A549 (cell line): ENCODE measurements at regions of chr16 and their contacts with region 1.

Region 1: DNA sequence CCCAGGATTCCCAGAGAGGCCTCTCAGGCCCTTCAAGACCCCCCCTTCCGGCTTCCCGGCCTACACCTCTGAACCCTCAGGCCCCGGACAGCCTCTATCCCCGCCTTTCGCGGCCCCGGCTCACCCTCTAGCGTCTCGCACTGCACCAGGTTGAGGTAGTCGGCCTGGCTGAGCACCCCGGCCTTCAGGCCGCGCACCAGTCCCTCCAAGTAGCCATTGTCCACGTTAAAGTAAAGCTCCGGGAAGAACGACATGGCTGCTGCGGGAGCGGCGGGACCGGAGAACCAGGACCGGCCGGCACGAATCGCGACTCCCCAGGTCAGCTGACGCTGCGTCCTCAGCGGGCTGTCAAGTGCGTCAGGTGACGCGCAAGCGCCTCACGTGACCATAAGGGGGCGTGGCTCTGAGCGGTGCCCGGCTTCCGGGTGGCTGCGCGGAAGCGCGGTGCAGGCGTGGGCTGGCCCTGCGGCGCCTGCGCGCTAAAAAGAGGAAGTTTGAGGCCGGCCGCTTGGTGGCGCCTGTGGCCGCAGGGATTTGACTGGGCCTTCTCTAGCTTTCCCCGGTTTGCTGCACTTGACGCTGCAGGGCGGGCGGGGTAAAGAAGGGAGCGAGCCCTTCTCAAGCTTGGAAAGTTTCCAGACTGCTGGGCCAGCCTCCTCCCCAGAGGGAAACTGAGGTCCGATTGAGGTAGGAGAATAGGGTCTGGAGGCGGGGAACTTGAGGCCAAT is at the start of gene ATP6V0D1:
- DNase-seq: peak; percentile 95 to 98
- ATAC-seq: peak; percentile 91 to 93
- H3K4me3 ChIP-seq: peak within 1 kb of the TSS; percentile 91
- H3K27ac ChIP-seq: peak within 1 kb of the TSS; percentile 86 to 88
- H3K4me1 ChIP-seq: peaks cover 13% of the 10 kb centered on the region
- CTCF ChIP-seq: peak; percentile 88
- EP300 ChIP-seq: 0 out of 5 replicates have a peak, but pooled peaks of 1 of the 2 experiments have one; percentile 14
- POLR2A ChIP-seq: peak; percentile 62
- RAD21 ChIP-seq: peak; percentile 46 to 61; a peak in 4 of 5 replicates
- polyA plus RNA-seq, gene ATP6V0D1: 45.6 and 45.7 TPM in 2 replicates

Region 2: GRCh38 chr16:67461600-67462592 is 19.1 kb before region 1 on chr16:
- CTCF ChIA-PET with region 1: interaction called, 32 read pairs
- POLR2A ChIA-PET with region 1: interaction called, 3 read pairs
- DNase-seq: no peak
- ATAC-seq: no peak
- H3K4me3 ChIP-seq: no peak overlapping the region
- H3K27ac ChIP-seq: no peak overlapping the region; a peak in 1 of 6 replicates
- H3K4me1 ChIP-seq: peaks cover 17% of the 10 kb centered on the region; the same call in 2 of the 3 replicates
- CTCF ChIP-seq: no peak
- EP300 ChIP-seq: no peak
- POLR2A ChIP-seq: no peak
- RAD21 ChIP-seq: no peak

Region 3: GRCh38 chr16:67470359-67470758 is 10.6 kb before region 1 on chr16:
- CTCF ChIA-PET with region 1: interaction called, 32 read pairs
- POLR2A ChIA-PET with region 1: no interaction called
- DNase-seq: no peak
- ATAC-seq: no peak
- H3K4me3 ChIP-seq: no peak overlapping the region
- H3K27ac ChIP-seq: no peak overlapping the region
- H3K4me1 ChIP-seq: peaks cover 4% of the 10 kb centered on the region; the same call in 2 of the 3 replicates
- CTCF ChIP-seq: no peak
- EP300 ChIP-seq: no peak
- POLR2A ChIP-seq: no peak
- RAD21 ChIP-seq: no peak

Region 4: DNA sequence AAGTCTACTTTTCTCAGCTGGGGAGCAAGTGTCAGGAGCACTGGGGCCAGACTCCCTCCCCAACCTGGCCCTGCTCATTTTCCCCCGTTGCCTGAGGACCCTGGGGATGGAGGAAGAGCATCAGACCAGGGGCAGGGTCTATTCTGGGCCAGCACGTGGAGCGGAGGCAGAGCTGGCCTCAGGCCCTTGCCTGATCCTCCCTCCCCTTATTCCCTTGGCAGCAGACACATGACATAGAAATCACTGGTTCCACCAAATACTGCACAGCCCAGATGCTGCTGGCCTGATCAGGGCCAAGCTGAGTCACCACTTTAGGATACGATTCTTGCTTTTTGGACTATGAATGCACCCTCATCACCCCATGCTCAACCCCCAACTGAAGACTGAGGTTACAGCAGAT is 18.1 kb after region 1 on chr16:
- CTCF ChIA-PET with region 1: interaction called, 84 read pairs
- POLR2A ChIA-PET with region 1: interaction called, 3 read pairs
- DNase-seq: no peak
- ATAC-seq: no peak
- H3K4me3 ChIP-seq: no peak overlapping the region
- H3K27ac ChIP-seq: no peak overlapping the region
- H3K4me1 ChIP-seq: peaks cover under 1% of the 10 kb centered on the region; the same call in 1 of the 3 replicates
- CTCF ChIP-seq: no peak
- EP300 ChIP-seq: no peak
- POLR2A ChIP-seq: no peak
- RAD21 ChIP-seq: no peak

Region 5: GRCh38 chr16:67514382-67514828 is 33.4 kb after region 1 on chr16:
- CTCF ChIA-PET with region 1: interaction called, 117 read pairs
- POLR2A ChIA-PET with region 1: interaction called, 8 read pairs
- DNase-seq: peak; percentile 69 to 89
- ATAC-seq: peak; percentile 82 to 86
- H3K4me3 ChIP-seq: no peak overlapping the region
- H3K27ac ChIP-seq: peak overlapping the region; percentile 15 to 43; a peak in 4 of 6 replicates
- H3K4me1 ChIP-seq: peaks cover 30% of the 10 kb centered on the region
- CTCF ChIP-seq: peak; percentile 79
- EP300 ChIP-seq: no peak
- POLR2A ChIP-seq: no peak
- RAD21 ChIP-seq: peak; percentile 71